RWPE1 (cell line): ENCODE measurements at regions of chr14 and their contacts with region 1.

Region 1: DNA sequence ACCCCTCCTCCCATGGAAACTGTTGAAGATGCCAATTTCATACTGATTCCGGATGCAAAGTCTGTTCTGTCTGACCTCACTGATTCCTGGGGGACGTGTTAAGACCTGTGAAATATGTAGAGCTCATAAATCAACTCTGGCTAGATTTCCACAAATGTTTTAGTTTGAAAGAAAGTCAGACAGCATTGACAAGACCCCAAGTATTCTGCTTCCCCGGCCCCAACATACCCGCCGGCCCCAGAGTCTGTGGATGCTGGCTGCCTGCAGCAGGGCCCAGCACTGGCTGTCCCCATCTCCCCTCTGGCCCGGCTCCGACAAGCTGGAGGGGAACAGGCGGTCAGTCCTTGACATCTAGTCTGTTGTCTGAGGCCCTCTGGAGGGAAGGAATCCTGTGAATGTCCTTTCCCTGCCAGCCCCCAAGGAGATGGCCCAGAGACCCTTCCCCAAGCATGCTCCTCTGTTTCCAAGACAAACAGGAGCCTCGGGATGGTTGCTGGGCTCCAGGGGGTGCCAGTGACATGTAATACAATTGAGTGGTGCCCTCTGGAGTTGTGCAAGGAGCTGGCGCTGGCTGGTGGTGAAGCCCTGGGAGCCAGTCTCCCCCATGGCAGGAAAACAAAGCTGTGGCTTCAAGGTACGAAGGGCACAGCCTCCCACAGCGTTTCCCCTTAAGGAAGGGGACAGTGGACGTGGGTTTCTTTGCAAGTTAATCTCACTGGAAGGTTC is 22.3 kb downstream of the FBLN5 start:
- DNase-seq: peak; percentile 35
- H3K27ac ChIP-seq: peak overlapping the region; percentile 81
- CTCF ChIP-seq: no peak

Region 2: DNA sequence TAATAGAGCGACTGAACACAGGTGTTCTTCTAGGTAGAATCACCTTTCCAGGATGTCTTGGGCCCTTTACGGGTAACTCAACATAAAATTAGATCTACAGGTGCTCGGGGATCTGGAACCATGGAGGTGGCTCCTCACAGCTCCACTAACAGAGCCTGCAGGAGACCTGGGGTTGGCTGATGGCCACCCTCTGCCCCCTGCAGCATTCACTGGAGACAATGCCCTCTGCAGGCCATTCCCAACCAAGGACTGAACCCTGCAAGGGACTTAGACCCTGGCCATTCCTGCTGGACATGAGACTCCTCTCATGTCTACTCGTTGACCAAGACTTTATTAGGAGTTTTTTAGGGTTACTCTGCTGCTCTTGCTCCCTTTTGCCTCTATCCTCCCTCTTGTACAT is 356.5 kb before region 1 on chr14:
- CTCF ChIA-PET with region 1: interaction called, 11 read pairs
- POLR2A ChIA-PET with region 1: no interaction called
- DNase-seq: no peak
- H3K27ac ChIP-seq: no peak overlapping the region
- CTCF ChIP-seq: no peak

Region 3: GRCh38 chr14:92190768-92191167 is 265.6 kb after region 1 on chr14:
- CTCF ChIA-PET with region 1: no interaction called
- POLR2A ChIA-PET with region 1: no interaction called
- DNase-seq: no peak
- H3K27ac ChIP-seq: no peak overlapping the region
- CTCF ChIP-seq: no peak